SK-N-SH (cell line): ENCODE measurements at regions of chr17 and their contacts with region 1.

Region 1: GRCh38 chr17:30336369-30337171 is 2.7 kb upstream of the TMIGD1 start:
- DNase-seq: peak; percentile 43
- H3K4me3 ChIP-seq: no peak overlapping the region
- H3K27ac ChIP-seq: no peak overlapping the region
- H3K4me1 ChIP-seq: peaks cover 7 to 16% of the 10 kb centered on the region in 2 experiments; a peak in 2 of 4 replicates
- H3K27me3 ChIP-seq: no peaks in the 10 kb centered on the region
- CTCF ChIP-seq: peak; percentile 86
- EP300 ChIP-seq: no peak
- RAD21 ChIP-seq: peak; percentile 67

Region 2: GRCh38 chr17:30323895-30324319 is 12.7 kb before region 1 on chr17:
- CTCF ChIA-PET with region 1: interaction called, 54 read pairs
- POLR2A ChIA-PET with region 1: interaction called, 3 read pairs
- DNase-seq: no peak
- H3K4me3 ChIP-seq: no peak overlapping the region
- H3K27ac ChIP-seq: no peak overlapping the region
- H3K4me1 ChIP-seq: no peaks in the 10 kb centered on the region
- H3K27me3 ChIP-seq: no peaks in the 10 kb centered on the region
- CTCF ChIP-seq: no peak
- EP300 ChIP-seq: no peak
- RAD21 ChIP-seq: no peak

Region 3: DNA sequence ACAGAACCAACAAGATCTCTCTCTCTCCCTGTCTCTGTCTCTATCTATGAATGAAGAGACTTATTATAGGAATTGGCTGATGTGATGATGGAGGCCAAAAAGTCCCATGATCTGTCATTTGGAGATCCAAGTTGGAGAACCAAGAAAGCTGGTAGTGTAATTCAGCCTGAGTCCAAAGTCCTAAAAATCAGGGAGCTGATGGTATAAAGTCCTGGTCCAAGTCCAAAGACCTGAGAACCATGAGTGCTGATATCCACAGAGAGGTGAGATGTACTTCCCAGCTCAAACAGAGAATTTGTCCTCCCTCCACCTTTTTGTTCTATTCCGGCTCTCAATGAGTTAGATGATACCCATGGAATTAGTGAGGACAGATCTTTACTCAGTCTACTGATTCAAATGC is 12.7 kb after region 1 on chr17:
- CTCF ChIA-PET with region 1: interaction called, 11 read pairs
- POLR2A ChIA-PET with region 1: no interaction called
- DNase-seq: no peak
- H3K4me3 ChIP-seq: no peak overlapping the region
- H3K27ac ChIP-seq: no peak overlapping the region
- H3K4me1 ChIP-seq: peaks cover 0 to 9% of the 10 kb centered on the region in 2 experiments; a peak in 2 of 4 replicates
- H3K27me3 ChIP-seq: no peaks in the 10 kb centered on the region
- CTCF ChIP-seq: no peak
- EP300 ChIP-seq: no peak
- RAD21 ChIP-seq: no peak

Region 4: GRCh38 chr17:30477083-30477773 is 140.7 kb after region 1 on chr17 and contains the start of gene GOSR1:
- CTCF ChIA-PET with region 1: interaction called, 23 read pairs
- POLR2A ChIA-PET with region 1: no interaction called
- DNase-seq: peak; percentile 89
- H3K4me3 ChIP-seq: peak within 1 kb of the TSS; percentile 58 to 99
- H3K27ac ChIP-seq: peak within 1 kb of the TSS; percentile 78 to 86
- H3K4me1 ChIP-seq: peaks cover 5 to 13% of the 10 kb centered on the region in 2 experiments; a peak in 3 of 4 replicates
- H3K27me3 ChIP-seq: no peaks in the 10 kb centered on the region
- CTCF ChIP-seq: peak; percentile 75
- EP300 ChIP-seq: no peak; a peak in 1 of 4 replicates
- RAD21 ChIP-seq: peak; percentile 59
- polyA plus RNA-seq, gene GOSR1: 12.5 and 13.7 TPM in 2 replicates